ENCODE measurements at regions of chr2 and their contacts with region 1.

Region 1: DNA sequence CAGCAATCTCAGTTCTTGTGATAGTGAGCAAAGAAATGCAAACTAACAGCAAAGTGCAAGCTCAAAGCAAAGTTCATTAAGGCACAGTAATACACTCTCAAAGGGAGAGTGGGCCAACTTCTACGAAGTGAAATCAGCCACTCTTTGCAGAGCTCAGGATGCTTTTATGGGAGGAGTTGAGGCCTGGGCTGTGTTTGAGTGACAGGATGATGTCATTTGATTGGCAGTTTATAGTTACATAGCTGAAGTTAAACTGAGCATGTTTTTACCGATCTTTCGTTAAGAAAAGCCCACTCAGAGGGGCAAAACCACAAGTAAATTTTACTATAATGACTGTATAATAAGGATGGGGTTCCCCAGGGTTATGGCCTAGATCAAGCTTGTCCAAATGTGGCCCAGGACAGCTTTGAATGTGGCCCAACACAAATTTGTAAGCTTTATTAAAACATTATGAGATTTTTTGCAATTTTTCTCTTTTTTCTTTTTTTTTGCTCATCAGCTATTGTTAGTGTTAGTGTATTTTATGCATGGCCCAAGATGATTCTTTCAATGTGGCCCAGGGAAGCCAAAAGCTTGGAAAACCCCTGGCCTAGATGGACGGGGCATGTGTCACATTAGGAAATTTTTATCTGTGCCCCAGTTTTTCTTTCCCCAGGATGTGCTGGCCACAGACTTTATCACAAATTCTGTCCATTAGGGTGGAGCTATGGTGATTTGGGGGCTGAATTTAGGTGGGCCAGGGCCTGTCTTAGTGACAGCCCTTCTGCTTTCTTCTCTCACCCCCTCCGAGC is 8.3 kb upstream of the DNAH7 start:
- DNase-seq: no peak
- ATAC-seq: no peak
- H3K4me3 ChIP-seq: no peak overlapping the region
- H3K27ac ChIP-seq: no peak overlapping the region
- H3K4me1 ChIP-seq: no peaks in the 10 kb centered on the region
- H3K27me3 ChIP-seq: peaks cover 2% of the 10 kb centered on the region; the same call in 1 of the 2 replicates
- CTCF ChIP-seq: no peak

Region 2: GRCh38 chr2:196101325-196101991 is 24.5 kb after region 1 on chr2:
- CTCF ChIA-PET with region 1: no interaction called
- POLR2A ChIA-PET with region 1: interaction called, 13 read pairs
- in situ Hi-C with region 1: no loop called
- intact Hi-C with region 1: no loop called
- DNase-seq: no peak
- ATAC-seq: no peak
- H3K4me3 ChIP-seq: no peak overlapping the region
- H3K27ac ChIP-seq: no peak overlapping the region
- H3K4me1 ChIP-seq: no peaks in the 10 kb centered on the region
- H3K27me3 ChIP-seq: peaks cover 2% of the 10 kb centered on the region
- CTCF ChIP-seq: no peak

Region 3: DNA sequence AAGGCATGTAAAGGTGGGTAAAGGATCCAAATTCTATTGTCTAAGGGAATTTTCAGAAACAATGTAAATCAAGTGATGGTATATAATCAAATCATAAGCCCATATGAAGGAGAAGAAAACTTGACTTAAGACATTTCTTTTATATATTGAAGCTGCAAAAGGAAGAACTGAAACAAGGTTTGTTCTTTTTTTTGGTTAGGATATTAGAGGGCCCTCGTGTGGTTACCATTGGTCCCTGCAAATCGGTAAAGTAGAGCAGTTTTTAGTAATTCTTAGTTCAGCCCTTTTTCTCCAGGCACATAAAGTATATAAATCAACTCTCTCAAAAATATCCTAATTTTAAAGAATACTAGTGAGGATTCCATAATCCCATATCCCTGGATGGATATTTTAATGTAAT is 200.0 kb after region 1 on chr2:
- CTCF ChIA-PET with region 1: interaction called, 3 read pairs
- POLR2A ChIA-PET with region 1: no interaction called
- in situ Hi-C with region 1: no loop called
- intact Hi-C with region 1: loop called (anchors 5 kb)
- DNase-seq: no peak
- ATAC-seq: no peak
- H3K4me3 ChIP-seq: no peak overlapping the region; a peak in 1 of 4 replicates
- H3K27ac ChIP-seq: no peak overlapping the region
- H3K4me1 ChIP-seq: peaks cover 6% of the 10 kb centered on the region
- H3K27me3 ChIP-seq: no peaks in the 10 kb centered on the region
- CTCF ChIP-seq: peak; percentile 63; the same call in 1 of the 2 replicates

Region 4: DNA sequence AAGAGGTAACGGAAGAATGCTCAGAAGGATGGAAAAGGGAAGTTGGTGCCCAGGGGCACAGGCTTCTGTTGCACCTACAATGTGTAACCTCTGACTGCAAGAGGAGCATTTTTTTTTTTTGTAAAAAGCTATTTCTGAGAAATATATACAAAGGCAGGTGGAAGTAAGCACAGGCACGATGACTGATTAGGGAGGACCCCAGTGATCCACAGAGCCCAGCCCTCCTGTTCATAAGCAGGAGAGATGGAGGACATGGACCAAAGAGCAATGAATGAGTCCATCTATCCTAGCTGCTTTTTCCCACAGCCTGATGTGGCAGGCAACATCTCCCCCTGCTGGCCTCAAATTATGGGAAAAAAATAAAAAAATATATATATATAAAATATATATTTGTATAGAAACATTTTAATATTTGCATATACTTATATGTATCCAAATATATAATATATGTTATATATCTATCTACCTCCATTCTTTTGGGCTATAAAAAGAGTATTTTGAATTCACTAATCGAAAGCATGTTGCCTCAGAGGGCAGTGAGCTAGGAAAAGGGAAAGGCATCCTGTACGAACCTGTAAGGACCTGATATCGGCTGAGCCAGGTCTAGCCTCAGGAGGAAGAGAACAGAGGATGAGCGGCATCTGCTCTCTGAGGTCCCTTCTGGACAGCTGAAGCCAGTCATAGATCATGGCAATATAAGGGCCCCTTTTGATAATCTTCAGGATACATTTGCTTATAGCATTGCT is 260.4 kb after region 1 on chr2:
- CTCF ChIA-PET with region 1: interaction called, 4 read pairs
- POLR2A ChIA-PET with region 1: no interaction called
- in situ Hi-C with region 1: no loop called
- intact Hi-C with region 1: loop called (anchors 5 kb)
- DNase-seq: no peak
- ATAC-seq: no peak
- H3K4me3 ChIP-seq: no peak overlapping the region
- H3K27ac ChIP-seq: peak overlapping the region; percentile 87; the same call in 1 of the 2 replicates
- H3K4me1 ChIP-seq: peaks cover 38% of the 10 kb centered on the region
- H3K27me3 ChIP-seq: no peaks in the 10 kb centered on the region
- CTCF ChIP-seq: peak; percentile 51

Measured in Panc1 (cell line).